Activated B cell treated with CpG ODN at 0.5 μM for 24 hours (primary cell): ENCODE measurements at regions of chr22 and their contacts with region 1.

Region 1: DNA sequence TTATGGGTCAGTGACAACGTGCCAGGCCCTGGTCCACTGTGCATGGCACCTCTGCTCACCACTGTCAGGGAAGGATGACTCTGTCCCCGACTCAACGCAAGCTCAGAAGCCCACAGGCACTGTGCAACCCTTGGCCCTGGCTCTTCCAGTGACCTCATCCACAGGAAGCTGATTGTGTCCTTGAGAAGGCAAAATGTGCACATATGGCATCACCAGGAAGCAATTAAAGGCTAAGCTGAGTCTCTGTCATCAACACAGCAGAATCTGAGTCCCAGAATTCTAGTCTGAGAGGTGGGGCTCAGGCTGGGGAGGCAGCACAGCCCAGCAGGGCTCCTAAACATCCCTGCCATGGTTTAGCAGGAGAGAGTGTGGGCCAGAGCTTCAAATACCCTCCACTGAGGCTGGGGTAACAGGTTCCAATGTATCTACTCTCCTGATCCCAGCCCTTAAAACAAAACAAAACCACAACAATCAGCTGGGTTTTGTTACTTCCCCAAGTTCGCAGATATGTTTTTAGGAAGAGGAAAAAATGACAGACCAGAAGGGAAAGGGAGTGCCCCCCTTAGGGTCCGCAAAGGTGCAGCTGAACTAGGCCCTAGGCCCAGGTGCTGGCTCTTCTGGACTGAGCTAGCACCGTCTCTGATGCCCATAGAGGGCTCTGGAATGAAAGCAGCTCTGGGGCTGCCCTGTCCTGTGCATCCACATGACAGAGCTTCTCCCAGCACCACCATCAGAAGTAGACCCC is 33.5 kb upstream of the GNAZ start:
- DNase-seq: no peak
- ATAC-seq: peak; percentile 36
- H3K4me3 Mint-ChIP-seq: peak overlapping the region; percentile 45
- H3K27ac Mint-ChIP-seq: peak overlapping the region; percentile 75
- H3K4me1 Mint-ChIP-seq: peaks cover 59% of the 10 kb centered on the region
- H3K27me3 Mint-ChIP-seq: no peaks in the 10 kb centered on the region
- CTCF ChIP-seq: no peak

Region 2: DNA sequence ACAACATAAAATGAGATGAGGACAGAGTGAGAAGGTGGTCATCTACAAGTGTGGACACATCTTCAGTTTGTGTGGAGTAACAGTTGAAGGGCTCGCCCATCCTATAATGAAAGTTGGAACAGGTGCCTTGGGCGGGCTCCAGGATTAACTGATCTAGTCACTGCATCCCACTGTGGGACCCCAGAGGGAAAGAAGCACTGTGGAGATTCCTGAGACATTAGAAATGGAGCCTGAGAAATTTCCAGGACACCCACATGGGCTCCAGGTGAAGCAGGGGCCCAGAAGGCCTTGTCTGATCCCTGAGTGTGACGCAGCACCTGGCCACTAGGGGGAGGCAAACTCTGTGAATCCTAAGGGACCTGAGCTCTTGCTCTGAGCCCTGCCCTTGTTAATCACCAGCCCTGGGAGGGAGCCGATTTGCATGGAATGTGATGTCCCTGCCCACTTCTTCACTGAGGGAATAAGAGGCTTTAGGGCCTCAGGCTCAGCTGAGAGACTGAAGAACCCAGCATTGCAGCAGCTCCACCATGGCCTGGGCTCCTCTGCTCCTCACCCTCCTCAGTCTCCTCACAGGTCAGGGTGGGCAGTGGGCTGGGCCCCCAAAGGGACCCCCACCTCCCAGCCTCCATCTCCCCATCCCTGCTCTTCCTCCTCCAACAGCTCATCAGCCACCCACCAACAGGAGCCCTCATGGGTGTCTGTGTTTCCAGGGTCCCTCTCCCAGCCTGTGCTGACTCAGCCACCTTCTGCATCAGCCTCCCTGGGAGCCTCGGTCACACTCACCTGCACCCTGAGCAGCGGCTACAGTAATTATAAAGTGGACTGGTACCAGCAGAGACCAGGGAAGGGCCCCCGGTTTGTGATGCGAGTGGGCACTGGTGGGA is 693.9 kb before region 1 on chr22:
- CTCF ChIA-PET with region 1: no interaction called
- POLR2A ChIA-PET with region 1: no interaction called
- intact Hi-C with region 1: no loop called
- DNase-seq: peak; percentile 56
- ATAC-seq: peak; percentile 59
- H3K4me3 Mint-ChIP-seq: peak overlapping the region; percentile 28
- H3K27ac Mint-ChIP-seq: peak overlapping the region; percentile 68
- H3K4me1 Mint-ChIP-seq: peaks cover 29% of the 10 kb centered on the region
- H3K27me3 Mint-ChIP-seq: no peaks in the 10 kb centered on the region
- CTCF ChIP-seq: peak; percentile 98

Region 3: GRCh38 chr22:22928666-22929380 is 108.0 kb before region 1 on chr22:
- CTCF ChIA-PET with region 1: no interaction called
- POLR2A ChIA-PET with region 1: no interaction called
- intact Hi-C with region 1: no loop called
- DNase-seq: peak; percentile 71
- ATAC-seq: peak; percentile 91
- H3K4me3 Mint-ChIP-seq: peak overlapping the region; percentile 56
- H3K27ac Mint-ChIP-seq: peak overlapping the region; percentile 96
- H3K4me1 Mint-ChIP-seq: peaks cover 100% of the 10 kb centered on the region
- H3K27me3 Mint-ChIP-seq: no peaks in the 10 kb centered on the region
- CTCF ChIP-seq: no peak

Region 4: DNA sequence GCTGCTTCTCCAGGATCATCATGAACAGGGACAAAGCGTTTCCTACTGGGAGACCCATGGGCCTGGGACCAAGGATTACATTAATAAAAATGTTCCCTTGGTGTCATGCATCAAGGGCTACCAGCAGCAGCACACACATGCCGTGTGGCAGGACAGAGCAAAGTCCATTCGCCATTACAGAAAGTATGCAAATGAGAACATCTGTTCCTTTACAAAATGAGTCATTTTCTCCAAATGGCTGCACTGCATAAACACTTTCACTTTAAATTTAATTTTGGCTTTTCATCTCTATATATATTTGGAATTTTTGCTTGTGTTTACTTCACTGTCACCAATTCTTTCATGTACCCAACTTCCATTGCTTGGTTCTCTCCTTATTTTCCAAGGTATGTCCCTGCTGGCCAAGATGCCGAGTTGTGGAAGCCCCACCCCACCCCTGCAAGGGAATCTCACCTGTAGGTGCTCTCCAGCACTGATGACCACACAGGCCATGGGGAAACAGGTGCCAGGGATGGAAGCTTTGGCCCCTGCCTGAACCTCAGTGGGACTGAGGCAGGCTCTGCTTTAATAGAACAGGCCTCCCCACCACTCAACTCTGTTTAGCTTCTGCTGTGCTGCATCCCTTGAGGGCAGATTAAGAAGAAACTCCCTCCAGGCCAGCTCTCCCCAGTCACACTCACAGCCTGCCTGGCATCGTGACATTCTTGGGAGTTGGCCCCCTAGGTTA is 17.8 kb after region 1 on chr22:
- CTCF ChIA-PET with region 1: no interaction called
- POLR2A ChIA-PET with region 1: interaction called, 8 read pairs
- intact Hi-C with region 1: loop called (anchors 2 kb)
- DNase-seq: peak; percentile 21
- ATAC-seq: peak; percentile 86
- H3K4me3 Mint-ChIP-seq: peak overlapping the region; percentile 64
- H3K27ac Mint-ChIP-seq: peak overlapping the region; percentile 83
- H3K4me1 Mint-ChIP-seq: peaks cover 38% of the 10 kb centered on the region
- H3K27me3 Mint-ChIP-seq: no peaks in the 10 kb centered on the region
- CTCF ChIP-seq: no peak